Right ventricle myocardium inferior (tissue), 1 donor: ENCODE measurements at regions of chr1 and their contacts with region 1.

Region 1: GRCh38 chr1:94926915-94927404 is at the start of gene CNN3:
- DNase-seq: peak; percentile 94
- ATAC-seq: peak; percentile 95
- total RNA-seq, gene CNN3: 57.0 TPM

Region 2: DNA sequence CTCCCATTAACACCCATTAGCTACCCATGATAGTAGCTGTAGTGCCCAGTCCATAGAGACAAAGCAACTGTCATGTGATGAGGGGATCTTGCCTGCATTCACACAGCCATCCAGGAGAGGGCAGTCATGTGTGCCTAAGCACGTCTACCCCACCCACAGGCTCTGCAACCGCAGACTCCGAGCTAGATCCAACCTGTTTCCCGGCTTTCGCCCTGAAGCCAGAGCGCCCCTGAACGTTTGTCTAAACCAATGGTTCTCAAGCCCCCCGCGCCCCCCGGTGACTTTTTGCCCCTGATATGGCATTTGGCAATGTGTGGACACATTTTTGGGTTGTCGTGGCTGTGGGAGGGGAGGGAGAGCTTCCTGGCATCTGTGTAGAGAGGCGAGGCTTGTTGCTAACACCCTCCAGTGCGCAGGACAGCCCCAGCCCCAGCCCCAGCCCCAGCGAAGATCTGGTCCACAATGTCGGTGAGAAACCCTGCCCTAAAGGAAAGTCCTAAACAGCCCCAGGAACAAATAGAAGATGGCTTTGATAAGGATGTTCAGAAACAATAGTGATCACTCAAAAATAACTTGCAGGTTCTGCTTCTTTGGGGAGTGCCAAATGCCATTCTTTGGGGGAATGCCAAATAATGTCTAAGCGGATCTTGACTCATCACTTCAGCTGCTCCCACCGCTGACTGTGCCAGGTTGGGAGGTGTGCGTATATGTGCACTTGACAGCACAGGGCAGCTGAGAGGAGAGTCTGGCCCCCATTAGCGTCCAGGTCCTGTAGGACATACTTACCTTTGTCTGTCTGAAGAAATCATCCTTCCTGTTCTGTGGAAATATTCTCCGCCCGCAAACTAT is 72.3 kb before region 1 on chr1:
- intact Hi-C with region 1: loop called (anchors 2 kb)
- DNase-seq: peak; percentile 83
- ATAC-seq: peak; percentile 95

Region 3: DNA sequence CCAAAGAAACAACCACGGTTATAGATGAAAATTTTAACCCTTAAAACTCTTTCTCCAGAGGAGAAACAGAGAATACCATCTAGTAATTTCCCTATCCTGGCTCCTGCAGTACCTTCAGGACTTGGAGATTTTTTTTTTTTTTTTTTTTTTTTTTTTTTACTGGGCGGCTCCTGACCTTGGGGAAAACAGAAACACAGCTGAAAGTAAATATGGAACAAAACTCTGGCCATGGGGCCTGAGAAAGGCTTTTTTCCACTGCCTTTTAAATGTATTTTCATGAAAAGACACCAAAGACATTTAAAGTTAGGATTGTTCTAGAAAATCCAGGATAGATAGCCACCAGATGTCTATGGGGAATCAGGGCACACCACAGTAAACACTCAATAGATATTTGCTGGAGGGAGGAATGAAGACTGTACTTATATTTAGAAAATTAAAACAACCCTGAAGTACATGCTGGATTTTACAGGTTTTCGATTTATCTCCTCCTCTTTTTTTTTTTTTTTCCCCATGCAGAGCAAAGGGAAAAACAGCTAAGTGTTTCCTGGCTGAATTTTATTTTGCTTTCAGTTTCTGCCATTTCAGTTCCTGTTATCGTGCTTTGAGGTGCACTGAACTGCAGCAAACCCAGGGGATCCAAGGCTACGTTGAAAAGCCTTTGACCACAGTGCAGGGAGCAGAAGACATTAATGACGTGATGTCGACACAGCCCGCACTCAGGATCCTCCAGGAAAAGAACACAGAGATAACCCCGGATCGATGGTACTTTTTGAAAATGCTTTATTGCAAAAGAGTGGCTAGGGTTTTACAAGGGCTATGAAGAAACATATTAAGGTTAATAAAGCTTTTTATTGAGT is 35.7 kb after region 1 on chr1:
- intact Hi-C with region 1: loop called (anchors 5 kb)
- DNase-seq: no peak
- ATAC-seq: peak; percentile 58

Region 4: GRCh38 chr1:95023399-95024043 is 96.6 kb after region 1 on chr1:
- intact Hi-C with region 1: loop called (anchors 5 kb)
- DNase-seq: no peak
- ATAC-seq: peak; percentile 65